Ascending aorta (tissue), 2 donors: ENCODE measurements at regions of chr2 and their contacts with region 1.

Region 1: GRCh38 chr2:165305391-165306096 is 66.3 kb downstream of the SCN2A start:
- DNase-seq: no peak
- H3K4me3 ChIP-seq: no peak overlapping the region
- H3K27ac ChIP-seq: no peak overlapping the region
- H3K4me1 ChIP-seq: no peaks in the 10 kb centered on the region
- H3K27me3 ChIP-seq: no peaks in the 10 kb centered on the region
- CTCF ChIP-seq: no peak

Region 2: GRCh38 chr2:165239230-165239629 is 66.3 kb before region 1 on chr2 and contains the start of gene SCN2A:
- intact Hi-C with region 1: loop called (anchors 5 kb)
- DNase-seq: no peak
- H3K4me3 ChIP-seq: no peak within 1 kb of the TSS
- H3K27ac ChIP-seq: no peak within 1 kb of the TSS
- H3K4me1 ChIP-seq: no peaks in the 10 kb centered on the region
- H3K27me3 ChIP-seq: no peaks in the 10 kb centered on the region
- CTCF ChIP-seq: peak; percentile 30 to 47 (median 44)
- total RNA-seq, gene SCN2A: 0.53 TPM

Region 3: GRCh38 chr2:165563468-165564225 is 258.1 kb after region 1 on chr2:
- intact Hi-C with region 1: no loop called
- DNase-seq: no peak
- H3K4me3 ChIP-seq: no peak overlapping the region
- H3K27ac ChIP-seq: no peak overlapping the region
- H3K4me1 ChIP-seq: no peaks in the 10 kb centered on the region
- H3K27me3 ChIP-seq: no peaks in the 10 kb centered on the region
- CTCF ChIP-seq: no peak